RWPE1 (cell line): ENCODE measurements at regions of chr6 and their contacts with region 1.

Region 1: DNA sequence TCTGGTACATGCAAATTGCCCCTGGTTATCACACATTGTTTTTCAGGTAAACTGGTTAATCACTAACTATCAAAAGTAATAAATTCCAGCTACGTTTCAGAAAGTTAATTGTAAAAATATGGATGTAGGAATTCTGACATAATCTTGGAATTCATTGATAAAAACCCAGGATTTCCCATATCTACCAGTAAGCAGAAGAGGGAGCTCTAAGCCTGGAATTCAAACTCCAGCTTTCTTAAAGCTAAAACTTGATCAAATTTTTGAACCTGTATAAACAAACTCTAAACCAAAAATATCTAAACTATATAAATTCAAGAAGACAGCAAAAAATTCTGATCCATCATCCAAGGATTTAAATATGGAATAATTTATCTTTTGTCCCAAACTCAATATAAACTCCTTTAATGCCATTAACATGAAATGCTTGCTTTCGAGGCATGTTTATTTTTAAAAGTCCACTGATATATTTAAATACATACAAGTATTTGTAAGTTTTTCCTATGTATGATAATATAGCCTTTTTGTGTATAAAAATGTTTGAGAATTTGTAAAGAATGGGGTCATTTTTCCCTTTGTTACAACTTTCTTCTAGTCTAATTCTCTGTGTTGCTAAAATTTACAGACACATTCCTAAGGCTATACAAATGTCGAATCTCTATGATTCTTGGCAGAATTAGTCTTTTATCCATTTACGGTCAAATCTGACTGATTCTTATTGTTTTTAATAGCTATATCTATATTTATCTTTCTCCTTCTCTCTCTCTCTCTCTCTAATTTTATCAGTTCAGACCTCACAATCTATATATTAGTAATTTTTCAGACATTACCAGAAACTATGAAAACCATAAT is 91.4 kb upstream of the RNF217 start:
- DNase-seq: peak; percentile 48
- H3K27ac ChIP-seq: no peak overlapping the region
- CTCF ChIP-seq: peak; percentile 69

Region 2: GRCh38 chr6:124590001-124590765 is 280.7 kb before region 1 on chr6:
- CTCF ChIA-PET with region 1: no interaction called
- POLR2A ChIA-PET with region 1: no interaction called
- DNase-seq: no peak
- H3K27ac ChIP-seq: no peak overlapping the region
- CTCF ChIP-seq: no peak

Region 3: DNA sequence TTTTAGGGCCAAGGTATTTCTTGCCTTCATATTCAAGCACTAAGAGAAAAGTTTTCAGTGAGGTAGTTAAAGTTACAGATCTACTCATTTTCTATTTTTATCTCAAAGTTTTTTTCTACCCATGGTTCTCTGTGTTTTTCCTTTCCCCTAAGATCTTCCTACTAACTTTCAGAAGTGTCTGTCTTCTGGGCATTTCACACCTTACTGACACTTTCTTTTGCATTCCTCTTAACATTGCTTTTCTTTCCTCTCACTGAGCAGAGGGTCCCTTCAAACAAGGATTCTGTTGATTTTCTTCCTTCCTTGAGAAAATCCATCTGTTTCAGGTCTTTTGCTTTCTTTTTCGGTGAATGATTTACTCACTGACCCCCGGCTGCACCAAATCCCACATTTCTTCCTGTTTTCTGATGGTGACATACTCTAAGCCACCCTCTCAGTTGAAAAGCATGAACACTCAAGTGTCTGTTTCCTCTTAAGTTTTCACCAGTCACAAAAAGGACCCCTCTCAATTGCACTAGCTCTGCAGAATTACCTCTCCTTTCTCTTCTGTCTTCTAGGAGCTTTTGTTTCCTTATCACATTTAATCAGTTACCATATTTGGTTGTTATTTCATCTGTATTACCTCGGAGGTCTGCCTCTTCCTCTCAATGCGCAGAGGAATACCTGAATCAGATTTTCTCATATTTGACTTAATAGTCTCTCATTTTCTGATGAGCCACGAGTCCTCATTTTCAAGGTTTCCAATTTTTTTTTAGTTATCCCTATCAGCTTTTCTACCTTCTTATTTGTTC is 17.9 kb after region 1 on chr6:
- CTCF ChIA-PET with region 1: no interaction called
- POLR2A ChIA-PET with region 1: no interaction called
- DNase-seq: no peak
- H3K27ac ChIP-seq: no peak overlapping the region
- CTCF ChIP-seq: no peak

Region 4: DNA sequence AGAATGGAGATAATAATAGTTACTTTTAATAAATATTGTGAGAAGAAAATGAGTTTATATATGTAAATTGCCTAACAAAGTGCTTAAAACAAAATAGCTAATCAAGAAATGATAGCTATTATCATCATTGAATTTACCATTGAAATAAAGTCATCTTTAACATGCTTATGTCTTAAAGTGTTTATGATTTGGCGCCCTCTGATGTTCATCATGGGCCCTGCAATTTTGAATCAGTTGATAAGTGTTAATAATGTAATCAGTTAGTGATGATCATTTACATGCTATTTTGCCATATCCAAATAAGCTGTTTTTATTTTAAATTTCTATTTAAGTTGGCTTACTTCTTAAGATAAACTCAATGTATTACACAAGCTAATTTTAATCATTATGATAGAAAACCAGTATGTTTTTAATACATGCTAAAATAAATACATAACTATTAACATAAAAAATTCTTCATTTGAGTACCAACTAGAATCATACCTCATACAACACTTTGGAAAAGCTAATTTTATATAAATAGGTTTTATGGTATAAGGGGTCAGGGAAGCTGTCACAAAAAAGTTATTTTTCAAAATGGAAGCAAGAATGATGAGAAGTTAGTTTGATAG is 243.5 kb after region 1 on chr6:
- CTCF ChIA-PET with region 1: interaction called, 27 read pairs
- POLR2A ChIA-PET with region 1: no interaction called
- DNase-seq: peak; percentile 34
- H3K27ac ChIP-seq: no peak overlapping the region
- CTCF ChIP-seq: peak; percentile 89

Region 5: DNA sequence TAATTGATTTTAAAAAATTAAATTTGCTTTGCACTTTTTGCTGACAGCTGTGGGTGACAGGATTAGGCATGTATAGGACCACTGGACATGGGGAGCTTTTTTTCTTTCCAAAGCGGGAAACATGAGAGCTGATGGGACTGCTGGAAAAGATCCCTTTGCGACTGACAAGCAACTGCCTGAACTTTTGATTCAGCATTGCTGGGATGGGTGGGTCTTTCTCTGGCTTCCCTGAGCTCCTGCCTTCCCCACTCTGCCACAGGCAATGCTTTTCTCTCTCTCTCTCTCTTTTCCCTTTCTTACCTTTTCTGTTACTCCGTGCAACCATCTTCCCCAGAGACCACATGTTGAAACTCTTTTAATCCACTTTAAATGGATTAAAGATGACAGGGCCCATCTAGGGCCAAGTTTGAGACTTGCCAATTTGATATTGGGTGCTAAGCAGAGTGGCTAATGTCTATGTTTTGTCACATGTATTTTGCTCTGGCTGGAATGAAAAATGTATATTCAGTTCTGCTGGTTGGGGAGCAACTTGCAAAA is 249.3 kb after region 1 on chr6:
- CTCF ChIA-PET with region 1: interaction called, 11 read pairs
- POLR2A ChIA-PET with region 1: no interaction called
- DNase-seq: no peak
- H3K27ac ChIP-seq: no peak overlapping the region
- CTCF ChIP-seq: no peak